Tibial artery (tissue), 4 donors: ENCODE measurements at regions of chr1 and their contacts with region 1.

Region 1: DNA sequence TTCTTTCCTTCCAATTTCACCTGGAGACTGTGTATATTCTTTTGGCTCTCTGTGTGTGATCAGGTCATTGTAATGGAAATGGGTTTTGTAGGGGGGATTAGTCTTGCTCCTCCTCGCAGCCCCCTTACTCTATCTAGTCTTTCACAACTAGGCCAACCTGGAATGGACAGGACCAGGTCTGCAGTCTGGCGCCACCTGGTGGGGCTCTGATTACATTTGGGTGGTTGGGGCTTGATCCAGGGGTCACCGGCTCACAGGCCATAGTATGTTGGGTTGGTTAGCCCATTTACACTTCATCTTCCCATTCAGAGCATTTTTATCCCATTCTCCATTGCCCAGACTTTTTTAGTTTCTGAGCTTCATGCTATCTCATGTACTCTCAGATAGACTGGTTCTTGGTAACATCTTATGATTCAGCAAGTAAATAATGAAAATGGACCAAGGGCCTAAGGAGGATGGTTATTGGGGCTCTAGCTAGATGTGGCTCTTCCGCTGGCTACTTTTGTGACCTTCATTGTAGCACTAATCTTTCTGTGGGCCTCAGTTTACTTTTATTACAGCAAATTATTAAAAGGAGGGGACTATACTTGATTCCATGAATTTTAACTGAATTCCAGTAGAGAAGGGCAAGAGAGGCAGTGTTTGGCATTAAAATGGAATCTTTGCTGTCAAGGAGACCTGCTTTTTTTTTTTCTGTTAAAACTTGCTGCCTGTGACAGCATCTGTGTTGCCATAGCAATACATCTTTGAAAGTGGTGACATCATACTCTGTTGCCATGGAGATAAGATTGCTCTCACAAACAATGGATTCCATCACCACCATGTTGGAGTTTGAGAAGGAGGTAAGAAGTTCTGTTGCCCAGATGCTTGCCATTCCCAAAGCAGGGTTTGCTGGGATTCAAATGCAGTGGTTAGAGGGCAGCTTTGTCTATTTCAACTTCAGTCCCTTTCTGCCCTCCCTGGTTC is 150.1 kb downstream of the PLXNA2 start:
- DNase-seq: peak; percentile 75
- H3K4me3 ChIP-seq: no peak overlapping the region
- H3K27ac ChIP-seq: no peak overlapping the region
- H3K4me1 ChIP-seq: peaks cover 0 to 16% (median 13%) of the 10 kb centered on the region in 4 donors
- H3K27me3 ChIP-seq: no peaks in the 10 kb centered on the region
- CTCF ChIP-seq: peak; percentile 68 to 69

Region 2: GRCh38 chr1:208029381-208030287 is 64.4 kb before region 1 on chr1:
- intact Hi-C with region 1: loop called (anchors 10 kb)
- DNase-seq: peak; percentile 54 to 80
- H3K4me3 ChIP-seq: no peak overlapping the region
- H3K27ac ChIP-seq: peak overlapping the region; percentile 65 to 67
- H3K4me1 ChIP-seq: peaks cover 7 to 36% (median 30%) of the 10 kb centered on the region in 4 donors
- H3K27me3 ChIP-seq: no peaks in the 10 kb centered on the region
- CTCF ChIP-seq: no peak